MCF 10A (cell line): ENCODE measurements at regions of chr7 and their contacts with region 1.

Region 1: DNA sequence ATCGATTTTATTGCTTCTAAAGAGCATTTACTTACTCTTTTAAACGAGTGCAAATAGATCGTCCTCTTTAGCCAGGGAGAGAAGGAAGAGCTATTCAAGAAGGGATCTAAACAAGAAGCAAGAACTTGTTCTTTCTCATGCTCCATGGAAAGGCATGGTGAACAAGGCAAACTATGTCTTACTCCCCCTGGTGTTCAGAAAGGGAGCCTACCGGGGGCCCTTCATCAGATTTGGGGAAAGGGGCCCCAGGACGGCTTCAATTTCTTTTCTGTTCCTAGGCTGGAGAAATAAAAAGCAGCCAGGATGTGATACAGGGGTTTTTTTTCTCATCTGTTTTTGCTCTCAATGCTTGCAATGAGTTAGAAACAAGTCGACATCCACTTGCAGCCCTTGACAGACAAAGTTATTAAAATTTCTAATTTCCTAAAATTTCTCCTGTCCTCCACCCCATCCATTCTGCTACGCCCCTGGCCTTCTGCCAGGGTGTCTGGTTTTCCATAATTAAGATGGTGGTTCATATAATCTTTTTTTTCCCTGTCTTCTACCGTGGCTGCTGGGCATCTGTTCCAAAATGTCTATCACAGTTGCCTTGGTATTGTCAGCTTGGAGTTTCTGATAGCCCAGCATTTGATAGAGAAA is 214.4 kb downstream of the CREB5 start:
- DNase-seq: peak; percentile 60
- H3K4me3 Mint-ChIP-seq: no peak overlapping the region
- H3K27ac Mint-ChIP-seq: no peak overlapping the region
- H3K4me1 Mint-ChIP-seq: peaks cover 5% of the 10 kb centered on the region
- H3K27me3 Mint-ChIP-seq: no peaks in the 10 kb centered on the region
- CTCF ChIP-seq: peak; percentile 67

Region 2: GRCh38 chr7:28408960-28409715 is 217.6 kb before region 1 on chr7:
- CTCF ChIA-PET with region 1: no interaction called
- POLR2A ChIA-PET with region 1: interaction called, 3 read pairs
- intact Hi-C with region 1: loop called (anchors 5 kb)
- DNase-seq: peak; percentile 95
- H3K4me3 Mint-ChIP-seq: peak overlapping the region; percentile 79
- H3K27ac Mint-ChIP-seq: peak overlapping the region; percentile 90
- H3K4me1 Mint-ChIP-seq: peaks cover 35% of the 10 kb centered on the region
- H3K27me3 Mint-ChIP-seq: peaks cover 13% of the 10 kb centered on the region
- CTCF ChIP-seq: no peak

Region 3: GRCh38 chr7:28641752-28642545 is 15.2 kb after region 1 on chr7:
- CTCF ChIA-PET with region 1: interaction called, 10 read pairs
- POLR2A ChIA-PET with region 1: interaction called, 4 read pairs
- intact Hi-C with region 1: no loop called
- DNase-seq: no peak
- H3K4me3 Mint-ChIP-seq: no peak overlapping the region
- H3K27ac Mint-ChIP-seq: no peak overlapping the region
- H3K4me1 Mint-ChIP-seq: no peaks in the 10 kb centered on the region
- H3K27me3 Mint-ChIP-seq: no peaks in the 10 kb centered on the region
- CTCF ChIP-seq: no peak

Region 4: DNA sequence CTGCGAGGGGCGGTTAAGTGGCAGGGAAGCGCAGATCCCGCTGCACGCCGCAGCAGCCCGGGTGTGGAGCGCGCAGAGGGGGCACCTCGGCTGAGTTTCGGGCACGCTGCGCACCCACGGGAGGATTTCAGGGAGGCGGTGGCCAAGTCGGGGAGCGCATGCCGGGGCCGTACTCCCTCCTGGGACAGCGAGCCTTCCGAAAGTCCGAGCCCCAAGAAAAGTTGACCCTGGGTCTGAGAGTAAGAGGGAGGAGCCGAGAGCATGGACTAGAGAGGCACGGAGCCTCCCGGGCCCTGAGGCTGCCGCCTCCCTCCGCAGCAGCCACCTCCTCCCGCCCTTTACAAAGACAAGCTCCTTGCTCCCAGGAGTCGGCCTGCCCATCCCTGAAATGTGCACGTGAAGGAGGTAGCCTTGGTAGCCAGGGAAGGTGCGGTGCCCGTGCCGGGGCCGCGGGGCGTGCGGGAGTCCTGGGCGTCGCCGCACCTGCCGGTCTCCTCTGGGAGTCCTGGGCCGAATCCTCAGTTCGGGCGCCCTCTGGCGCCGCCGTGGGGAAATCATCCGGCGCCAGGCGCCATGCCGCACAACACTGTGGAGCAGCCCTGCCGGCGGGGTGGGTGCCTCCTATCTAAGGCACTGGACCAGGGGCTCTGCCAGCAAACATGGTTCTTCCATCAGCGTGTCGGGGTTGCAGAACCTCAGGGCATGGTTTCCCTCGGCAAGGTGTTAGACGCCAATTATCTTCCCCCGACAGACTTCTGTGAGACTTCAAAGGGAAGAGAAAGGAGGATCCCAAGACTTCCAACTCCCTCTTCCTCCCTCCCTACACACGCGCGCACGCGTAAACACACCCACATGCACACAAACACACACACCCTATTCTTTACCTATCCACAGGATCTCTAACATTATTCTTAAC is 227.3 kb after region 1 on chr7:
- CTCF ChIA-PET with region 1: no interaction called
- POLR2A ChIA-PET with region 1: no interaction called
- intact Hi-C with region 1: loop called (anchors 5 kb)
- DNase-seq: peak; percentile 74
- H3K4me3 Mint-ChIP-seq: peak overlapping the region; percentile 66
- H3K27ac Mint-ChIP-seq: no peak overlapping the region
- H3K4me1 Mint-ChIP-seq: peaks cover 19% of the 10 kb centered on the region
- H3K27me3 Mint-ChIP-seq: no peaks in the 10 kb centered on the region
- CTCF ChIP-seq: peak; percentile 92